Activated naive CD4-positive, alpha-beta T cell treated with anti-CD3 and anti-CD28 coated beads for 36 hours (primary cell): ENCODE measurements at regions of chr5 and their contacts with region 1.

Region 1: GRCh38 chr5:79702606-79703382 is 13.2 kb downstream of the CMYA5 start:
- DNase-seq: peak; percentile 59
- H3K4me3 Mint-ChIP-seq: no peak overlapping the region
- H3K27ac Mint-ChIP-seq: no peak overlapping the region
- H3K4me1 Mint-ChIP-seq: peaks cover 10% of the 10 kb centered on the region
- H3K27me3 Mint-ChIP-seq: no peaks in the 10 kb centered on the region

Region 2: DNA sequence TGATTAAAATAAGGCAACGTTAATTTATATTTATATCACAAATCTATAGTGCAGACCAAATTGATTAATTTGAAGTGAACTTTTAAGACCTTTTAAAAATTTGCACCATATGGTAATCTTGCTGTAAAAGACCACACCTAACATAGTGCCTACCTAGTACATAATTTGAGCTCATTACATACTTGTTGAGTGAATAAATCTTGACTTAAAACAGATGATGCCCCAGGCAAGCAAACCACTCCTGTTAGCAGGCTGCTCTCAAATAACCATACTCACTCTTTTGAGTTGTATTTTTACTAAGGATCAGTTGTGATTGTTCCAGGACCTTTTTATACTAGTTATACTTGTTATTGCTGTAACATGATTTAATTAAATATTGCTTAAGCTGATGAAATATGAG is 14.0 kb after region 1 on chr5:
- CTCF ChIA-PET with region 1: interaction called, 10 read pairs
- intact Hi-C with region 1: no loop called
- DNase-seq: no peak
- H3K4me3 Mint-ChIP-seq: no peak overlapping the region
- H3K27ac Mint-ChIP-seq: no peak overlapping the region
- H3K4me1 Mint-ChIP-seq: no peaks in the 10 kb centered on the region
- H3K27me3 Mint-ChIP-seq: no peaks in the 10 kb centered on the region

Region 3: GRCh38 chr5:79736528-79737514 is 34.0 kb after region 1 on chr5:
- CTCF ChIA-PET with region 1: interaction called, 4 read pairs
- intact Hi-C with region 1: loop called (anchors 2 kb)
- DNase-seq: peak; percentile 28
- H3K4me3 Mint-ChIP-seq: peak overlapping the region; percentile 50
- H3K27ac Mint-ChIP-seq: peak overlapping the region; percentile 58
- H3K4me1 Mint-ChIP-seq: peaks cover 60% of the 10 kb centered on the region
- H3K27me3 Mint-ChIP-seq: peaks cover 31% of the 10 kb centered on the region

Region 4: GRCh38 chr5:79774171-79774854 is 71.5 kb after region 1 on chr5:
- CTCF ChIA-PET with region 1: interaction called, 3 read pairs
- intact Hi-C with region 1: loop called (anchors 5 kb)
- DNase-seq: peak; percentile 15
- H3K4me3 Mint-ChIP-seq: no peak overlapping the region
- H3K27ac Mint-ChIP-seq: no peak overlapping the region
- H3K4me1 Mint-ChIP-seq: no peaks in the 10 kb centered on the region
- H3K27me3 Mint-ChIP-seq: no peaks in the 10 kb centered on the region

Region 5: GRCh38 chr5:79793722-79794121 is 90.9 kb after region 1 on chr5:
- CTCF ChIA-PET with region 1: no interaction called
- intact Hi-C with region 1: no loop called
- DNase-seq: no peak
- H3K4me3 Mint-ChIP-seq: no peak overlapping the region
- H3K27ac Mint-ChIP-seq: no peak overlapping the region
- H3K4me1 Mint-ChIP-seq: no peaks in the 10 kb centered on the region
- H3K27me3 Mint-ChIP-seq: peaks cover 6% of the 10 kb centered on the region

Region 6: DNA sequence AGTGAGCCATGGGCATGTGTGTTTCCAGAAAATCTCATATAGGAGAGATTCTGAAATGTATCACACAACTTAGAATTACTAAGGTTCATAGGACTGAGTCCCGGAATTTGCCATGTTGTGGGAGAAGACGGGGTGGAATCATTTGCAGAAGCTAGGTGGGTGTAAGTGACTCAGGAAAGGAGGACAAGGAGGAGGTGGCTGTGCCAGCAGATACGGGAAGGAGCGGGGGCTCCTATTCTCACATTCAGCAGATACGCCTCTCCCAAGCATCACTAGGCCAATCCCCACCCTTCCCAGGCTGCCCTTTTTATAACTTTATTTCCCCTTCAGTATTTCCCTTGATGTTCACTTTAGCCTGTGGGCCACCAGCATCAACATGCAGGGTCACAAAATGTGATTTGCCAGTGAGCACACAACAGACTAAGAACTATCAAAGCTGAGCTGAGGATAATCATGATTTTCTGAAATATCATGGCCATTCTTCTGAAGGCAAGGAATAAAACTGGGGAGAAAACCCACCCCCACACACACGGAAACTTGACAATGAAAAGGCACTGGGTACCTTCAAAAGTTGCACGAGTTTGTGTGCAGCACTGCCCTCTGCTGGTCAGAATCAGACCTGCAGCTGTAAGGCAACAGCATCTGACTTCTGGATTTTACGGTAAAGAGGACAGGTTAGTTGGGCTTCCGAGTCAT is 155.1 kb after region 1 on chr5:
- CTCF ChIA-PET with region 1: interaction called, 9 read pairs
- intact Hi-C with region 1: loop called (anchors 1 kb)
- DNase-seq: peak; percentile 92
- H3K4me3 Mint-ChIP-seq: no peak overlapping the region
- H3K27ac Mint-ChIP-seq: no peak overlapping the region
- H3K4me1 Mint-ChIP-seq: no peaks in the 10 kb centered on the region
- H3K27me3 Mint-ChIP-seq: no peaks in the 10 kb centered on the region